ENCODE measurements at regions of chr16 and their contacts with region 1.

Region 1: DNA sequence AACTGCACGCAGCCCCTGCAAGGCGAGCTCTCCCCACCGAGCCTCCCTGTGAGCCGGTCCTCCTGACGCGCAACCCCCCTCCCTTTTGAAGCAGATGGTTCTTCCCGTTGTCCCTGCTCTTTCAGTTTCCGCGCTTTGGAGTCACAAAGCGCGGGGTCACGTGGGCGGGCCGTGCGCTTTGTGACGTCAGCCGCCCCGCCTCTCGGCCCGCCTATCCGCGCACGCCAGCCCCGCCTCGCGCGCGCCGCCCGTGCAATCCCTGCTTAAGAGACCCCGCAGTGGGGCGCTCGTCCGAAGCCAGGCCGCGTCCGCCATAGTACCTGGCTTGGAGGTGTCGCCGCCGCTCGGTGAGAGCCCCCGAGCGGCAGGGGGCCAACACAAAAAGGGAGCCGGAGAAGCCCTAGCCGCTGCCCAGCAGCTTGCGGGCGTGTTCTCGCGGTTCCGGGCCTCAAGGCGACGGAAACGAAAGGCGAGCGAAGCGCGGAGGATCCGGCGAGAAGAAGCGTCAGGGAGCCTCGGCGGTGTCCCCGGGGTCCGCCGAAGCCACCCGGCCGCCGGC is at the start of gene RBBP6:
- DNase-seq: peak; percentile 95 to 97
- ATAC-seq: peak; percentile 96 to 99 (median 98)
- H3K4me3 ChIP-seq: peak within 1 kb of the TSS; percentile 98
- H3K27ac ChIP-seq: peak within 1 kb of the TSS; percentile 100
- H3K4me1 ChIP-seq: peaks cover 12% of the 10 kb centered on the region
- H3K27me3 ChIP-seq: no peaks in the 10 kb centered on the region
- CTCF ChIP-seq: peak; percentile 27
- total RNA-seq, gene RBBP6: 21.8 to 30.7 (median 25.7) TPM

Region 2: GRCh38 chr16:24478401-24478800 is 61.0 kb before region 1 on chr16:
- intact Hi-C with region 1: no loop called
- DNase-seq: no peak
- ATAC-seq: no peak
- H3K4me3 ChIP-seq: no peak overlapping the region
- H3K27ac ChIP-seq: no peak overlapping the region
- H3K4me1 ChIP-seq: no peaks in the 10 kb centered on the region
- H3K27me3 ChIP-seq: peaks cover 0 to 4% (median 3%) of the 10 kb centered on the region in 3 donors
- CTCF ChIP-seq: no peak

Region 3: GRCh38 chr16:24504472-24505345 is 34.7 kb before region 1 on chr16:
- intact Hi-C with region 1: no loop called
- DNase-seq: peak in 1 of 2 donors; percentile 53
- ATAC-seq: peak; percentile 57 to 77 (median 60)
- H3K4me3 ChIP-seq: no peak overlapping the region
- H3K27ac ChIP-seq: no peak overlapping the region
- H3K4me1 ChIP-seq: peaks cover 10% of the 10 kb centered on the region
- H3K27me3 ChIP-seq: no peaks in the 10 kb centered on the region
- CTCF ChIP-seq: peak; percentile 69

Region 4: DNA sequence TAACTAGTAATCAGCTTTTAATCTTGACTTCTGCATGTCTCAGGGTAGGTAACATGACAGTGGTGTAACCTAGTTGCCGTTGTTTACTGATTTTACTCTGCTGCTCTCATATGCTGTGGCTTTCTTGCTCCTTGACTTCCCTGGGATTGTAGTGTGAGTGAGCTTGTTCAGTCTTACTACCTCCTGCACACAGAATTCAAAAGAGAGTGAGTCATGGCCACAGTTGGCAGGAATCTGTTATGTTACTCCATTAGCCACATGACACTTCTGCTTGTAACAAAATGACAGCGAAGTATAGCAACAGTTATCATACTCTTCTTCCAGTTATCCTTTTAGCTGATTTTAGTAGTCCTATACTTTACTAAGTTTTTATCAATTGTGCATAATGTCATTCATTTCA is 208.9 kb after region 1 on chr16:
- intact Hi-C with region 1: loop called in 1 of 2 experiments (anchors 10 kb)
- DNase-seq: no peak
- ATAC-seq: peak; percentile 96 to 97 (median 96)
- H3K4me3 ChIP-seq: peak overlapping the region; percentile 21
- H3K27ac ChIP-seq: peak overlapping the region; percentile 86
- H3K4me1 ChIP-seq: peaks cover 96% of the 10 kb centered on the region
- H3K27me3 ChIP-seq: no peaks in the 10 kb centered on the region
- CTCF ChIP-seq: no peak

Region 5: GRCh38 chr16:24863582-24864437 is 324.4 kb after region 1 on chr16:
- intact Hi-C with region 1: no loop called
- DNase-seq: no peak
- ATAC-seq: no peak
- H3K4me3 ChIP-seq: no peak overlapping the region
- H3K27ac ChIP-seq: no peak overlapping the region
- H3K4me1 ChIP-seq: no peaks in the 10 kb centered on the region
- H3K27me3 ChIP-seq: no peaks in the 10 kb centered on the region
- CTCF ChIP-seq: no peak

Region 6: GRCh38 chr16:25257504-25257955 is 718.2 kb after region 1 on chr16 and contains the start of gene ZKSCAN2:
- intact Hi-C with region 1: loop called in 1 of 2 experiments (anchors 10 kb)
- DNase-seq: peak; percentile 94 to 95
- ATAC-seq: peak; percentile 93 to 96 (median 95)
- H3K4me3 ChIP-seq: peak within 1 kb of the TSS; percentile 96
- H3K27ac ChIP-seq: peak within 1 kb of the TSS; percentile 100
- H3K4me1 ChIP-seq: peaks cover 41% of the 10 kb centered on the region
- H3K27me3 ChIP-seq: no peaks in the 10 kb centered on the region
- CTCF ChIP-seq: no peak
- total RNA-seq, gene ZKSCAN2: 5.2 to 6.8 (median 6.3) TPM

Measured in psoas muscle (tissue), 8 donors.